ENCODE measurements at regions of chr15 and their contacts with region 1.

Region 1: DNA sequence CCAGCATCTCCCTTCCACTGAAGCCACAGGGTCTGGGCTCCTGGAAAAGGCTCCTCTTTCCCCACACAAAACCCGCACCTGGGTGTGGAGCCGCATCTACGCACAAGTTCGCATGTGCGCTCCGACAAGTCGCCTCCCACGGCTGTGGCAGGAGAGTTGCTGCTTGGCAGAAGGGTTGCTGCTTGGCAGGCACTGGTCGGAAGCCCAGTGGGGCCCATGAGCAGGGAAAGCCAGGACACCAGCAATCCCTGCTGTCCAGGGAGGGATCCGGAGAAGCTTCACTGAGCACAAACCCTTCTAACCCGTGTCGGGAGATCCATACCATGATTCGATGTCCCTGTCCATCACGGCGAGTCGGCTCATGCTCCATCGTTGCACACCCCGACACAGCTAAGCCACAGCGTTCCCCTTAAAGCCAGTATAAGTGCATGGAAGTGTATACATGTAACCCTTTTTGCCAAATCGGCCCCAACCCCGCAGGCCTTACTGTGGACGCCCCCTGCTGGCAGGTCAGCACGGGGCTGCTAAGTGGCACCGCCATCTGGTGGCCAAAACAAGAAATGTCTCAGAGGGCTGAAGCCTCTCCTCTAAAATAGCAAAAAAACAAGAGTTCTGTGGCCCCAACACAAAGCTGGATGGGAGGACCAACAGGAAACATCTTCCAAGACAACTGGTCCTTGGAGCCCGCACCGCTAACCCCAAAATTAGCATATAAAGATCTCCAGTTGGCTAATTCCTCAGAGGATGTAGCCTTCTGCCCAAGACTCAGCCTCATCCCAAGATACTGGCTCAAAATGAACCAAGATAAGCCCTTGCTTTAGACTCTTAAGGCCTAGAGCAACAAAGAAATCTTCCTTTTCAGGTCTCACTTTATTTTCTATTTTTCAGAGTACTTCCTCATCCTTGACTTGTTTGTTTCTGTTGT is 8.3 kb downstream of the ANKRD63 start:
- DNase-seq: peak; percentile 91
- ATAC-seq: peak; percentile 60
- H3K4me3 Mint-ChIP-seq: no peak overlapping the region
- H3K27ac Mint-ChIP-seq: no peak overlapping the region
- H3K4me1 Mint-ChIP-seq: peaks cover 21% of the 10 kb centered on the region
- H3K27me3 Mint-ChIP-seq: peaks cover 25% of the 10 kb centered on the region

Region 2: DNA sequence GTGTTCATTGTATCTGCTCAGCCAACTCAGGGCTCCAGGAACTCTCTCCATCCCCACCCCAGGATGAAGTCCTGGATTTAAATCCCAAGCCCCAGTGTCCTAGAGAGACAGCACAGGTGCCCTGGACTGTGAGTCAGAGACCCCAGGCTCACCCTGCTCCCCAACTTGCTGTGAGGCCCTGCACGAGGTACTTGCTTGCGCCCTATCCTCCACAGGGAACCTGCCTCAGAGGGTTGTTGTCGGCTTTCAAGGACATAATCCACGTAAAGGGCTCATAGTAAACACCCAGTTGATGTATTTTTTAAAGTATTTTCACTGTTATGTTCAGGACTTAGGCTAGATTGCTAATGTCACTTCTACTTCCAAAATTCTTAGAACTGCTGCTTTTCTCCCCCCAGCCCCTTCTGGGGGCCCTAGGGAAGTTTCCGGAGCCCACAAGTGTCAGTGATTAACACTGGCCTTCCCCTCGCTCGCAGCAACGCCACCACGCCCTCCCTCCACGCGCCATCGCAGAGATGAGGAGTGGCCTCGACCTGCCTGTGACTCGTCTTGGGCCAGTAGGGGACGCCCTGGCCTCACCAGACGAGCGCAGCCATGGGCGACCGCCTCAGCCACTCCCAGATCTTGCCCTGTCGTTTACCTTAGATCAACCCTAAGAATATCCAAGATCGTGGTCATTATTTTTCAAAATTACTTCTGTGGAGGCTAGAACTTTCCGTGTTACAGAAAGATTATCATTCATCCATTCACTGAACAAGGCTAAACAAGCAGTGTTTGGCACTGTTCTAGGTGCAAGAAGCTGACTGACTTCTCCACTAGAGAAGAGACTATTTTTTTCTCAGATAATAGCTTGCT is 229.7 kb before region 1 on chr15:
- CTCF ChIA-PET with region 1: interaction called, 96 read pairs
- POLR2A ChIA-PET with region 1: no interaction called
- DNase-seq: peak; percentile 88
- ATAC-seq: peak; percentile 92
- H3K4me3 Mint-ChIP-seq: peak overlapping the region; percentile 9
- H3K27ac Mint-ChIP-seq: peak overlapping the region; percentile 53
- H3K4me1 Mint-ChIP-seq: peaks cover 76% of the 10 kb centered on the region
- H3K27me3 Mint-ChIP-seq: no peaks in the 10 kb centered on the region

Region 3: GRCh38 chr15:40217159-40217824 is 57.3 kb before region 1 on chr15:
- CTCF ChIA-PET with region 1: interaction called, 214 read pairs
- POLR2A ChIA-PET with region 1: interaction called, 5 read pairs
- DNase-seq: peak; percentile 62
- ATAC-seq: peak; percentile 86
- H3K4me3 Mint-ChIP-seq: no peak overlapping the region
- H3K27ac Mint-ChIP-seq: no peak overlapping the region
- H3K4me1 Mint-ChIP-seq: no peaks in the 10 kb centered on the region
- H3K27me3 Mint-ChIP-seq: no peaks in the 10 kb centered on the region

Region 4: GRCh38 chr15:40249482-40250303 is 24.9 kb before region 1 on chr15:
- CTCF ChIA-PET with region 1: interaction called, 43 read pairs
- POLR2A ChIA-PET with region 1: no interaction called
- DNase-seq: no peak
- ATAC-seq: no peak
- H3K4me3 Mint-ChIP-seq: no peak overlapping the region
- H3K27ac Mint-ChIP-seq: no peak overlapping the region
- H3K4me1 Mint-ChIP-seq: peaks cover 13% of the 10 kb centered on the region
- H3K27me3 Mint-ChIP-seq: peaks cover 37% of the 10 kb centered on the region

Region 5: DNA sequence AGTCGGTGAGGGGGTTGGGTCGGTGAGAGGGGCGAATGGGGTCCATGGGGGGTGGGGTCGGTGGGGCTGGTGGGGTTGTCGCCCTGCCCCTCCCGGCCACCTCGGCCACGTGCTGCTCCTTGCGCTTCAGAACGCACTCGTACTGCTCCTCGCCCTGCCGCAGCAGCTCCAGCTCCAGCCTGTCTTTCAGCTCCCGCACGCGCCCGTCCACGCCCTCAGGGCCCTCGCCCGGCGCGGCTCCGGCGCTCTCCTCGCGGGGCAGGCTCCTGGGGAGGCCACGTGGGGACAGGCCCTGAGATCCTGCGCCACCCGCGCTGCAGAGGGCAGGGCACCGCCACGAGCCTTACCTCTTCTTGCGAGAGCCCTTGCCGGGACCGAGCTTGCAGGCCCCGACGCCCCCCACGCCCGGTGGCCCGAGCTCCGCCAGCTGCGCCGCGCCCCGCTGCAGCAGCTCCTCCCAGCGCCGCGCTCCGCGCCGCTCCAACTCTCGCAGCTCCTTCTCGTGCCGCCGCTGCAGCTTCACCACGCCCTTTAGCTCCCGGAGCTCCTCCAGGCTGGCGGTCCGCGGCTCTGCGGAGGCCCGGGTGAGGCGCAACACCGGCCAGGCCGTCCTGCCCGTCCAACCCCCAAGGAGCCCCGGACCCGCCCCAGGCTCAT is 16.4 kb after region 1 on chr15:
- CTCF ChIA-PET with region 1: interaction called, 49 read pairs
- POLR2A ChIA-PET with region 1: no interaction called
- DNase-seq: no peak
- ATAC-seq: no peak
- H3K4me3 Mint-ChIP-seq: no peak overlapping the region
- H3K27ac Mint-ChIP-seq: no peak overlapping the region
- H3K4me1 Mint-ChIP-seq: no peaks in the 10 kb centered on the region
- H3K27me3 Mint-ChIP-seq: no peaks in the 10 kb centered on the region

Region 6: GRCh38 chr15:40330368-40330836 is 55.8 kb after region 1 on chr15:
- CTCF ChIA-PET with region 1: interaction called, 30 read pairs
- POLR2A ChIA-PET with region 1: no interaction called
- DNase-seq: no peak
- ATAC-seq: no peak
- H3K4me3 Mint-ChIP-seq: no peak overlapping the region
- H3K27ac Mint-ChIP-seq: no peak overlapping the region
- H3K4me1 Mint-ChIP-seq: peaks cover 33% of the 10 kb centered on the region
- H3K27me3 Mint-ChIP-seq: no peaks in the 10 kb centered on the region

Region 7: DNA sequence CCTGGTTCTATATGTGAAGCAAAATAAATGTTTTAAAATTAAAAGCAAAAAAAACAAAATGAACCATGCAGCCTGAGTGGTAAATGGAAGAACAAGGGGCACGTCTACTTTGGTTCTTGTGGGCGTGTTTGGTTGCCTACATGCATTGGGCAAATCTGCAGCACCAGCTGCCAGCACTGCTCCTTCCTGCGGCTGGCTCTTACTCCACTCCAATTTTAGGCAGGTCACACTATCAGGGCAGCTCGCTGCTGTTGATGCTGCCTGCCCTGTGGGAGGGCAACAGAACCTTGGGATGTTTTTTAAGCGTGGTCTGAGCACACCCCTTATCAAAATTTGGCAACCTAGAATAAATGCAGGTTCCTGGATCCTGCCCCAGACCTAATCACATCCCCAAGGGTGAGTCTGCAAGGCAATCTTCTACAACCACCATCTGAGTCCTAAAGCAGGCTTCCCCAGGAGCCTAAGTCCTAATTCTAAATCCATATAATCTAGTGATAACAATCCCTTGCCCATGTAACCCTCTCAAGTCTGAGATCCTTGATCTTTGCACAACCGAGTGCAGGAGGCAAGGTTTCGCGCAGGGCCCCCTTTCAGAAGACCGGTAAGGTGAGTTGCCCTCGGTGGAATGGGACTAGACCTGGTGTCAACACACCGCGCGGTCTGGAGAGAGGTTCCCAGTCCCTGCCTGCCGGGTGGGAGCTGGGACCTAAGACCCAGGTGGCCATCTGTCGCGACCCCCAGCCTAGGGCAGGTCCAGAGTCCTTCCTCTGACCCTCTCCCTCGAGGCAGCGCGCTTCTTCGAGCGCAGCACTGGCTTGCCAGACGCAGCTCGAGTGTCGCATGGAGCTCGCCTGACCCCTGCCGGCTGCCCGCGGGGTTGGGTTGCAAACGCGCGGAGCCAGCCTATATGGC is 146.9 kb after region 1 on chr15:
- CTCF ChIA-PET with region 1: interaction called, 14 read pairs
- POLR2A ChIA-PET with region 1: no interaction called
- DNase-seq: peak; percentile 86
- ATAC-seq: peak; percentile 99
- H3K4me3 Mint-ChIP-seq: no peak overlapping the region
- H3K27ac Mint-ChIP-seq: no peak overlapping the region
- H3K4me1 Mint-ChIP-seq: peaks cover 8% of the 10 kb centered on the region
- H3K27me3 Mint-ChIP-seq: no peaks in the 10 kb centered on the region

Measured in activated CD8-positive, alpha-beta T cell treated with anti-CD3 and anti-CD28 coated beads, Interleukin-2, amount 10 ng/mL, durations not matched to agents 7 days and 5 days (primary cell).